ENCODE measurements at regions of chr9 and their contacts with region 1.

Region 1: DNA sequence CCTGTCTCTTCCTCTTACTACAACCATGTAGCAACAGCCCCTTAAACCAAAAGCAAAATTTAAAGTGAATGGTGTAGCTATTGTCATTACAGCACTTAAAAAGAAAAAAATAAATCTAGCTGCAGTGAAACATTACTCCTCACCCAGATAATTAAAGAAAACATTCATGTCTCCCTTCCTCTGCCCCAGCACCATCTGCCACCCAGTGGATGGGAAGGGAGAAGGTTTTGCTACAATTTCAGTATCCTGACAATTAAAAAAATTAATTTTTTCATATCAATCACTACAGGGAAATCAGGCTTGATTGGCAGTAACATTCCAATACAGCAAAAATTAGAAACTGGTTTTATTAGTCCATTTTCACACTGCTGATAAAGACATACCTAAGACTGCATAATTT is 147.4 kb upstream of the PUM3 start:
- DNase-seq: no peak
- H3K4me3 ChIP-seq: no peak overlapping the region
- H3K27ac ChIP-seq: no peak overlapping the region
- H3K4me1 ChIP-seq: no peaks in the 10 kb centered on the region
- H3K27me3 ChIP-seq: no peaks in the 10 kb centered on the region
- CTCF ChIP-seq: no peak
- POLR2A ChIP-seq: no peak

Region 2: DNA sequence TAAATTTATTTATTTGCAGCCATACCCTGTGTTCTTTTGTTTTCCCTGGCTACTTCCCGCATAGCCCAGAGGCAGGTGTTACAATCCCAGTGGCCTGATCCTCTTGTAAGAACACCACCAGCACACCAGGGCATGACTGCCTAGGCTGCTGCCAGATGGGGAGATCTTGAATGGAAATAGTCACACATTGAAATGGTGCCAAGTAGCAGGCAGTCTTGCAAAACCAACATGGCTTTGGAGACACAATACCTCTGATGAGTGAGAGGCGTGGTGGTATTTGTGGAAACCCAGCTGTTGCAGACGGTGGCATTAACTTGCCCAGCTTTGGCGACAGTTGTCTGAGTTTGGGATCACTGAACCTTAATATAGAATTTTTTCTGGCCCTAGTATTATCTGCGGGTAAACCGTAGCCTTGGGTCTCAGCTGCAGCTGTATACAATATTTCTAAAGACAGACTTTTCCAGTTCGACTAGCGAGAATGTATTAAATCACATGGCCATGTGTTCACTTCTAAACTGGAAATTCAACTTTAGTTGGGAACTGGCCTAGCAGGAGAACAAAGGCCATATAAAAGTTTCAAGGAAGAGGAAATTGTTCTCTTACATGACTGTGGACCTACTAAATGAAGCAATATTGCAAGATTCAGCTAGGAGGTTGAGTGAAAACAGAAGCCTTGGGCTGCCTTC is 699.2 kb before region 1 on chr9:
- intact Hi-C with region 1: loop called (anchors 5 kb)
- DNase-seq: peak in 1 of 2 donors; percentile 62
- H3K4me3 ChIP-seq: no peak overlapping the region
- H3K27ac ChIP-seq: peak overlapping the region; percentile 78
- H3K4me1 ChIP-seq: no peaks in the 10 kb centered on the region
- H3K27me3 ChIP-seq: no peaks in the 10 kb centered on the region
- CTCF ChIP-seq: no peak
- POLR2A ChIP-seq: no peak

Measured in breast epithelium (tissue), 4 donors.